Colonic mucosa (tissue), 4 donors: ENCODE measurements at regions of chr4 and their contacts with region 1.

Region 1: DNA sequence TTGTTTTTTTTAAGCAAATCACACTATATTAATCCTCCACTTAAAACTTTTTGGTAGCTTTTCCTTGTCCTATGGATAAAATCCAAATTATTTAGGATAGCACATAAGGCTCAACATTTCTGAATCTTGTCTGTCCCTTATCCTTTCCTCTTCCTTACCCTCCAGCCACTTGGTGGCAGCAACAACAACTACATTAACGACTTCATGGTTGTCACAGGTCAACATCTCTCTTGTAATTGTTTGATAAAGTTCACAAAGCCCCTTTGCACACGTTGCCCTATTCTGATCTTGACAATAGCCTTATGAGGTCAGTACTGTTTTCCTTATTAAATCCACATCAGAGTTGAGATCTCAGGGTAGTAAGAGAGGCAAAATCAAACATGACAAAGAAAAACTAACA is 269.0 kb upstream of the PABPC4L start:
- DNase-seq: peak; percentile 28
- H3K4me3 ChIP-seq: no peak overlapping the region
- H3K27ac ChIP-seq: no peak overlapping the region
- H3K4me1 ChIP-seq: no peaks in the 10 kb centered on the region
- H3K27me3 ChIP-seq: no peaks in the 10 kb centered on the region
- CTCF ChIP-seq: peak; percentile 29

Region 2: DNA sequence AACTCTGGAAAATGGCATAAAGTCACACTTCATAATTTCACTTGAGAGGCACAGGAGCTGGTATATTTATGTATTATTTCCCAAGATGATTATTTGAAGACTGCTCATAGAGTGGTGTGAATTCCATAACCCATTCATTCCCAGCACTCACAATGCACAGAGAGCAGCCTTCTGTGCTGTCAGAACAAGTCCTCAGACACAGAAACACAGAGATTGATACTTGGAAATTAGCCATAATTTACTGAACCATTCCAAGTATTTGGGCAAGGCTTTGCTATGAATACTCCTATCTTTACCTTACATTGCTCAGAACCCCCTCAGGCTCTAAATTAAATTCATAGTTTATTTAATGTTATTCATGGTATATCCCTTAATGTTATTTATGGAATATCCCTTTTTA is 322.6 kb before region 1 on chr4:
- intact Hi-C with region 1: no loop called
- DNase-seq: no peak
- H3K4me3 ChIP-seq: no peak overlapping the region
- H3K27ac ChIP-seq: no peak overlapping the region
- H3K4me1 ChIP-seq: no peaks in the 10 kb centered on the region
- H3K27me3 ChIP-seq: no peaks in the 10 kb centered on the region
- CTCF ChIP-seq: no peak

Region 3: GRCh38 chr4:134777606-134778005 is 307.1 kb after region 1 on chr4:
- intact Hi-C with region 1: loop called (anchors 5 kb)
- DNase-seq: no peak
- H3K4me3 ChIP-seq: no peak overlapping the region
- H3K27ac ChIP-seq: no peak overlapping the region
- H3K4me1 ChIP-seq: no peaks in the 10 kb centered on the region
- H3K27me3 ChIP-seq: no peaks in the 10 kb centered on the region
- CTCF ChIP-seq: no peak